Activated CD8-positive, alpha-beta T cell treated with anti-CD3 and anti-CD28 coated beads for 36 hours (primary cell): ENCODE measurements at regions of chr3 and their contacts with region 1.

Region 1: GRCh38 chr3:177359593-177360357 is 162.5 kb upstream of the TBL1XR1 start:
- DNase-seq: peak; percentile 96
- ATAC-seq: peak; percentile 75
- H3K4me3 Mint-ChIP-seq: peak overlapping the region; percentile 65
- H3K27ac Mint-ChIP-seq: peak overlapping the region; percentile 96
- H3K4me1 Mint-ChIP-seq: peaks cover 53% of the 10 kb centered on the region
- H3K27me3 Mint-ChIP-seq: no peaks in the 10 kb centered on the region
- CTCF ChIP-seq: no peak

Region 2: GRCh38 chr3:177050501-177051237 is 309.1 kb before region 1 on chr3:
- CTCF ChIA-PET with region 1: interaction called, 11 read pairs
- POLR2A ChIA-PET with region 1: interaction called, 6 read pairs
- intact Hi-C with region 1: loop called (anchors 2 kb)
- DNase-seq: no peak
- ATAC-seq: peak; percentile 86
- H3K4me3 Mint-ChIP-seq: no peak overlapping the region
- H3K27ac Mint-ChIP-seq: peak overlapping the region; percentile 64
- H3K4me1 Mint-ChIP-seq: peaks cover 9% of the 10 kb centered on the region
- H3K27me3 Mint-ChIP-seq: no peaks in the 10 kb centered on the region
- CTCF ChIP-seq: peak; percentile 73

Region 3: GRCh38 chr3:177197041-177197727 is 162.6 kb before region 1 on chr3 and contains the start of gene TBL1XR1:
- CTCF ChIA-PET with region 1: interaction called, 6 read pairs
- POLR2A ChIA-PET with region 1: interaction called, 111 read pairs
- intact Hi-C with region 1: loop called (anchors 1 kb)
- DNase-seq: peak; percentile 90
- ATAC-seq: peak; percentile 43
- H3K4me3 Mint-ChIP-seq: peak within 1 kb of the TSS; percentile 92
- H3K27ac Mint-ChIP-seq: peak within 1 kb of the TSS; percentile 99
- H3K4me1 Mint-ChIP-seq: peaks cover 51% of the 10 kb centered on the region
- H3K27me3 Mint-ChIP-seq: no peaks in the 10 kb centered on the region
- CTCF ChIP-seq: no peak
- total RNA-seq, gene TBL1XR1: 153 to 158 TPM

Region 4: DNA sequence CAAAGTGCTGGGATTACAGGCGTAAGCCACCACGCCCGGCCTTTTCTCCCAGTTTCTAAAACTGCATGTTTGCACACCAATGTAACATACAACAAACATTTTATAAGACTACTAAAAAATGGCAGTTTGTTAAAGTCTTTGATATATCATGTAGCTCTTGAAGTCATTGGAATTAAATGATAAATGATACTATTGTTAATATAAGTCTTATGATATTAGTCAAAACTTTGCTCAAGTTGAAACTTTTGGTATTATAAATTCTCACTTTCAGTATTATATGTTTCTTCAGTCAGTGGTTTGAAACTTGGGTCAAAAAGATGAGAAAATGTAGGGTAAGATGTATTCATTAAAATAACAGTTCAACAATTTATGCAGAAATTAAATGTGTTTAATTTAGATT is 44.9 kb before region 1 on chr3:
- CTCF ChIA-PET with region 1: no interaction called
- POLR2A ChIA-PET with region 1: no interaction called
- intact Hi-C with region 1: loop called (anchors 5 kb)
- DNase-seq: no peak
- ATAC-seq: peak; percentile 69
- H3K4me3 Mint-ChIP-seq: no peak overlapping the region
- H3K27ac Mint-ChIP-seq: peak overlapping the region; percentile 63
- H3K4me1 Mint-ChIP-seq: peaks cover 20% of the 10 kb centered on the region
- H3K27me3 Mint-ChIP-seq: no peaks in the 10 kb centered on the region
- CTCF ChIP-seq: no peak

Region 5: GRCh38 chr3:177337541-177338331 is 22.0 kb before region 1 on chr3:
- CTCF ChIA-PET with region 1: no interaction called
- POLR2A ChIA-PET with region 1: interaction called, 35 read pairs
- intact Hi-C with region 1: loop called (anchors 1 kb)
- DNase-seq: peak; percentile 93
- ATAC-seq: peak; percentile 85
- H3K4me3 Mint-ChIP-seq: peak overlapping the region; percentile 40
- H3K27ac Mint-ChIP-seq: peak overlapping the region; percentile 87
- H3K4me1 Mint-ChIP-seq: peaks cover 55% of the 10 kb centered on the region
- H3K27me3 Mint-ChIP-seq: no peaks in the 10 kb centered on the region
- CTCF ChIP-seq: no peak

Region 6: GRCh38 chr3:177371888-177372287 is 12.1 kb after region 1 on chr3:
- CTCF ChIA-PET with region 1: interaction called, 8 read pairs
- POLR2A ChIA-PET with region 1: interaction called, 10 read pairs
- intact Hi-C with region 1: no loop called
- DNase-seq: no peak
- ATAC-seq: no peak
- H3K4me3 Mint-ChIP-seq: no peak overlapping the region
- H3K27ac Mint-ChIP-seq: no peak overlapping the region
- H3K4me1 Mint-ChIP-seq: no peaks in the 10 kb centered on the region
- H3K27me3 Mint-ChIP-seq: no peaks in the 10 kb centered on the region
- CTCF ChIP-seq: no peak

Region 7: DNA sequence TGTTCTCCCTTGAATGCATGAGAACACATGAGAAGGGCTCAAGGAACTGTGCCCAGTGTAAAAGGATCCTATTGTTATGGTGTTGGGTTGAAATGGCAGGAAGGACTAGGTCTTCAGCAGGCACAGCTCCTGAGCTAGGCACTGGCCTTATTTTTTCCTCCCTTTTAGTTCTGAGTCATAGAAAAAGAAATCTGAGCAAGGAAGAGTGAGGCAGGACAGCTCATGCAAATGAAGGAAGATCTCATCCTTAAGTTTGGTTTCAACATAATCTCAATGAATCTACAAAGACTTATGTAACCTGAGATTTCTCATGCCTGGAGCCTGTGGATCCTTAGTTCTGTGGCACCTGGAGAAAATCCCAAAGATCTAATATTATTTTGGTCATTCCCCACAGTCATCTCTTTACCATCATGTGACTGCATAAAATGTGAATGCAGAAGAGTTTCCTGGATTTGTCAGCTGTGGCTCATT is 26.1 kb after region 1 on chr3:
- CTCF ChIA-PET with region 1: no interaction called
- POLR2A ChIA-PET with region 1: no interaction called
- intact Hi-C with region 1: no loop called
- DNase-seq: no peak
- ATAC-seq: no peak
- H3K4me3 Mint-ChIP-seq: no peak overlapping the region
- H3K27ac Mint-ChIP-seq: no peak overlapping the region
- H3K4me1 Mint-ChIP-seq: no peaks in the 10 kb centered on the region
- H3K27me3 Mint-ChIP-seq: no peaks in the 10 kb centered on the region
- CTCF ChIP-seq: no peak

Region 8: DNA sequence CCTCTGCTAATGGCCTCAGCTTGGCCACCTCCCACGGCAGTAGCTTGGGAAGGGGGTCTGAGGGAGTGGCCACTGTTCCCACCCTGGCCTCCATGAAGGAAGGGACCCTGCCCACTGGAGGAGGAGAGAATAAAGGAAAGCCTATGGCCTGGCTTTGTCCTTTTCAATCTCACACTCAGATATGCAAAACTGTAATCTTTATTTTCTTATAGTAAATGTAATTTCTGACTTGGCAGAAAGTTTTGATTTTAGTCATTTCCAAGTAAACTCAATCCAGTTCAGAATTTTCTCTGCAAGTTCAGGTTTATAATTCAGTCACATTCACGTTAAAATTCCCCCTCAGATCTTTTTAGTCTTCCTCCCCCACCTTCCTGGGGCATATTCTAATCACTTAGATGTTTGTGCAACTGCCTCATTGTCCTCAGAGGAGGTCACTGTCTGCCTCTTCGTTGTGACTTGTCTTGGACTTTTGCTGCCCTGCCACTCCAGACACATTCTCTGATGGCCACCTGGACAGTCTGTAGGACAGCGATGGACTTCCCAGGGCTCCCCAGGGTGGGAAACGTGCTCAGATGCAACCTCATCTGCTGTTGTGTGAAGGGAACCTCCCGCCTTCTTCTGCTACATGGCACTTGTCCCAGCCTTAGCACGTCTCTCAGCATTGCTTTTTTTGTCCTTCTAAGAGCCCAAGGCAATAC is 60.3 kb after region 1 on chr3:
- CTCF ChIA-PET with region 1: no interaction called
- POLR2A ChIA-PET with region 1: interaction called, 3 read pairs
- intact Hi-C with region 1: loop called (anchors 2 kb)
- DNase-seq: peak; percentile 32
- ATAC-seq: peak; percentile 87
- H3K4me3 Mint-ChIP-seq: no peak overlapping the region
- H3K27ac Mint-ChIP-seq: peak overlapping the region; percentile 83
- H3K4me1 Mint-ChIP-seq: peaks cover 34% of the 10 kb centered on the region
- H3K27me3 Mint-ChIP-seq: no peaks in the 10 kb centered on the region
- CTCF ChIP-seq: no peak

Region 9: GRCh38 chr3:177459401-177459800 is 99.6 kb after region 1 on chr3:
- CTCF ChIA-PET with region 1: no interaction called
- POLR2A ChIA-PET with region 1: no interaction called
- intact Hi-C with region 1: no loop called
- DNase-seq: no peak
- ATAC-seq: no peak
- H3K4me3 Mint-ChIP-seq: no peak overlapping the region
- H3K27ac Mint-ChIP-seq: no peak overlapping the region
- H3K4me1 Mint-ChIP-seq: no peaks in the 10 kb centered on the region
- H3K27me3 Mint-ChIP-seq: no peaks in the 10 kb centered on the region
- CTCF ChIP-seq: no peak

Region 10: DNA sequence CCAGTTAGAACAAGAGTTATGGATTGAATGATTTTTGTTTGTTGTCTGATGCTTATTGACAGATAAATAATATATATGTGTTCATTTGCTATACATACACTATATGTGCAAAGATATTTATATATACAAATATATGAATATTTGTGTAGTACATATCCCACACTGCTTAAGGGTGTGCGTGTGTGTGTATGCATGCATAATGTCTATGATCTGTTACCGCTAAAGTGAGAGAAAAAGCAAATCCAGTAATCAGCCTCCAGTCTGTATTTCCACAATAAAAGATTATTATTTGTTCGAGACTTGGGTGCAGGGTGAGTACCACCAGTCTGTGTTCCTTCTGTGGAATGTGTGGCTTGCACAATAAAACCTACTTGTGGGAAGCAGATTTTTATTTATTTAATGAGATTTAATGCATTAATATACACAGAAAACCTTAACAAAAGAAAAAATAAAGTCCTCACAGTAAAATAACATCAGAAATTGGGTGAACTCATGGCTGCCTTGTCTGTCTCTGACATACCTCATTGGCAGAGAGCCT is 203.5 kb after region 1 on chr3:
- CTCF ChIA-PET with region 1: no interaction called
- POLR2A ChIA-PET with region 1: no interaction called
- intact Hi-C with region 1: no loop called
- DNase-seq: no peak
- ATAC-seq: no peak
- H3K4me3 Mint-ChIP-seq: no peak overlapping the region
- H3K27ac Mint-ChIP-seq: no peak overlapping the region
- H3K4me1 Mint-ChIP-seq: no peaks in the 10 kb centered on the region
- H3K27me3 Mint-ChIP-seq: no peaks in the 10 kb centered on the region
- CTCF ChIP-seq: no peak